Caco-2 (cell line): ENCODE measurements at regions of chr11 and their contacts with region 1.

Region 1: GRCh38 chr11:78112582-78113275 is 26.7 kb downstream of the ALG8 start:
- DNase-seq: no peak
- H3K4me3 ChIP-seq: no peak overlapping the region
- H3K4me3 Mint-ChIP-seq: no peak overlapping the region
- H3K27ac Mint-ChIP-seq: no peak overlapping the region
- H3K4me1 ChIP-seq: no peaks in the 10 kb centered on the region
- H3K4me1 Mint-ChIP-seq: peaks cover 6% of the 10 kb centered on the region
- H3K27me3 ChIP-seq: no peaks in the 10 kb centered on the region
- H3K27me3 Mint-ChIP-seq: no peaks in the 10 kb centered on the region
- CTCF ChIP-seq: no peak

Region 2: GRCh38 chr11:77886401-77886800 is 226.3 kb before region 1 on chr11:
- CTCF ChIA-PET with region 1: no interaction called
- POLR2A ChIA-PET with region 1: no interaction called
- intact Hi-C with region 1: loop called (anchors 10 kb)
- DNase-seq: no peak
- H3K4me3 ChIP-seq: no peak overlapping the region
- H3K4me3 Mint-ChIP-seq: no peak overlapping the region
- H3K27ac Mint-ChIP-seq: no peak overlapping the region
- H3K4me1 ChIP-seq: no peaks in the 10 kb centered on the region
- H3K4me1 Mint-ChIP-seq: no peaks in the 10 kb centered on the region
- H3K27me3 ChIP-seq: no peaks in the 10 kb centered on the region
- H3K27me3 Mint-ChIP-seq: no peaks in the 10 kb centered on the region
- CTCF ChIP-seq: no peak

Region 3: GRCh38 chr11:77968337-77968736 is 144.4 kb before region 1 on chr11:
- CTCF ChIA-PET with region 1: no interaction called
- POLR2A ChIA-PET with region 1: no interaction called
- intact Hi-C with region 1: no loop called
- DNase-seq: no peak
- H3K4me3 ChIP-seq: no peak overlapping the region
- H3K4me3 Mint-ChIP-seq: no peak overlapping the region
- H3K27ac Mint-ChIP-seq: no peak overlapping the region
- H3K4me1 ChIP-seq: no peaks in the 10 kb centered on the region
- H3K4me1 Mint-ChIP-seq: no peaks in the 10 kb centered on the region
- H3K27me3 ChIP-seq: no peaks in the 10 kb centered on the region
- H3K27me3 Mint-ChIP-seq: no peaks in the 10 kb centered on the region
- CTCF ChIP-seq: no peak

Region 4: DNA sequence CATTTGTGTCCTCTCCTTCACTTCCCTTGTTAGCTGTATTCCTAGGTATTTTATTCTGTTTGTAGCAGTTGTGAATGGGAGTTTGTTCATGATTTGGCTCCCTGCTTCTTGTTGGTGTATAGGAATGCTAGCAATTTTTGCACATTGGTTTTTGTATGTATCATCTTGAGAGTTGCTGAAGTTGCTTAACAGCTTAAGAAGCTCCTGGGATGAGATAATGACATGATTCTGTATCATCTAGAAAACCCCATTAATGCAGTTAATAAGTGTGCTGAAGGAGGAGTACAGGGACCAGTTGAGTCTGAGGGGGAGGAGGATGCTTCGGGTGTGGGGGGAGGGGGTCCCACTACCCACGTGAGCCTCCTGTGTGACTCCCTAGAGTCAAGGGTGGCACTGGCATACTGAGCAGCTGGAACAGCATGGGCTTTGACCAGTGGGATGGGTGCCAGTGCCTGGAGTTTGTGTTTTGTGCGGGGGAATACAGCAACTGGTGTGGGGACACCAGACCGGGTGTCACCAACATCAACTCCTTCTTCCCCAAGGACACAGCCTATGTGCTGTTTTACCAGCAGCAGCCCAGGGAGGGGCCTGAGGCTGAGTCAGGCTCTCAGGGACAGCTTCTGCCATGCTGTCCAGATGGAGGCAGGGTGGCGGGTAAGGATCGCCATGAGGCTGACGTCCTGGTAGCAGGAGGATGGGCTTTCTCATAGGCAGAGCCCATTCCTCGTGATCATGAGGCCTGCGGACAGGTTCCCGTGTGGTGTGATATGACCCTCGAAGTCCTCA is 100.0 kb after region 1 on chr11:
- CTCF ChIA-PET with region 1: no interaction called
- POLR2A ChIA-PET with region 1: no interaction called
- intact Hi-C with region 1: no loop called
- DNase-seq: peak in 1 of 2 experiments; percentile 27
- H3K4me3 ChIP-seq: no peak overlapping the region
- H3K4me3 Mint-ChIP-seq: no peak overlapping the region
- H3K27ac Mint-ChIP-seq: no peak overlapping the region
- H3K4me1 ChIP-seq: no peaks in the 10 kb centered on the region
- H3K4me1 Mint-ChIP-seq: peaks cover 7% of the 10 kb centered on the region
- H3K27me3 ChIP-seq: no peaks in the 10 kb centered on the region
- H3K27me3 Mint-ChIP-seq: no peaks in the 10 kb centered on the region
- CTCF ChIP-seq: no peak

Region 5: GRCh38 chr11:78256962-78257361 is 144.2 kb after region 1 on chr11:
- CTCF ChIA-PET with region 1: no interaction called
- POLR2A ChIA-PET with region 1: no interaction called
- intact Hi-C with region 1: no loop called
- DNase-seq: no peak
- H3K4me3 ChIP-seq: no peak overlapping the region
- H3K4me3 Mint-ChIP-seq: no peak overlapping the region
- H3K27ac Mint-ChIP-seq: no peak overlapping the region
- H3K4me1 ChIP-seq: 0 out of 2 replicates have a peak, but pooled peaks cover 4% of the 10 kb centered on the region
- H3K4me1 Mint-ChIP-seq: peaks cover 9% of the 10 kb centered on the region
- H3K27me3 ChIP-seq: no peaks in the 10 kb centered on the region
- H3K27me3 Mint-ChIP-seq: no peaks in the 10 kb centered on the region
- CTCF ChIP-seq: no peak